Activated CD8-positive, alpha-beta T cell treated with anti-CD3 and anti-CD28 coated beads for 36 hours (primary cell): ENCODE measurements at regions of chr1 and their contacts with region 1.

Region 1: GRCh38 chr1:44002606-44003157 is 11.3 kb downstream of the CCDC24 start:
- DNase-seq: no peak
- ATAC-seq: no peak
- H3K4me3 Mint-ChIP-seq: no peak overlapping the region
- H3K27ac Mint-ChIP-seq: no peak overlapping the region
- H3K4me1 Mint-ChIP-seq: no peaks in the 10 kb centered on the region
- H3K27me3 Mint-ChIP-seq: no peaks in the 10 kb centered on the region
- CTCF ChIP-seq: peak; percentile 17

Region 2: DNA sequence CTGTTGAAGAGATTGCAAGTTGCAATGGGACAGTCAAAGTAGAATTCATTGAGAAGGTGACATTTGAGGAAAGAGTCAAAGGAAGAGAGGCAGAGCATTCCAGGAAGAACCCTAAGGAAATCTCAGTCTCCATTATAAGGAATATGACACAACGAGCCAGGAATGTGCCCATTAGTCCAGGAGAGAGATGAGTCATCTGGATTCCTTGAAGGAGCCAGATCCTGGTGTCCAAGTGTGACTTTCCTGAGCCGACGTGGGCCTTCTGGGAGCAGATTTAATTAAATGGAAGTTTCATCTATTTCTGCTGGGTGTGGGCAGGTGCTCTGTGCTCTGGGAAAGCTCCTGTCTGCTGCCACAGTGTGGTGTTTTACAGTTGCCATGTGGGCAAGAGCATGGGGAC is 180.6 kb before region 1 on chr1:
- CTCF ChIA-PET with region 1: no interaction called
- POLR2A ChIA-PET with region 1: no interaction called
- intact Hi-C with region 1: no loop called
- DNase-seq: no peak
- ATAC-seq: no peak
- H3K4me3 Mint-ChIP-seq: no peak overlapping the region
- H3K27ac Mint-ChIP-seq: no peak overlapping the region
- H3K4me1 Mint-ChIP-seq: no peaks in the 10 kb centered on the region
- H3K27me3 Mint-ChIP-seq: no peaks in the 10 kb centered on the region
- CTCF ChIP-seq: no peak

Region 3: GRCh38 chr1:43991476-43992231 is 11.0 kb before region 1 on chr1 and contains the start of gene CCDC24:
- CTCF ChIA-PET with region 1: interaction called, 29 read pairs
- POLR2A ChIA-PET with region 1: interaction called, 7 read pairs
- intact Hi-C with region 1: no loop called
- DNase-seq: peak; percentile 81
- ATAC-seq: peak; percentile 87
- H3K4me3 Mint-ChIP-seq: peak within 1 kb of the TSS; percentile 80
- H3K27ac Mint-ChIP-seq: peak within 1 kb of the TSS; percentile 59
- H3K4me1 Mint-ChIP-seq: peaks cover 12% of the 10 kb centered on the region
- H3K27me3 Mint-ChIP-seq: no peaks in the 10 kb centered on the region
- CTCF ChIP-seq: no peak
- total RNA-seq, gene CCDC24: 1.4 to 1.8 TPM

Region 4: DNA sequence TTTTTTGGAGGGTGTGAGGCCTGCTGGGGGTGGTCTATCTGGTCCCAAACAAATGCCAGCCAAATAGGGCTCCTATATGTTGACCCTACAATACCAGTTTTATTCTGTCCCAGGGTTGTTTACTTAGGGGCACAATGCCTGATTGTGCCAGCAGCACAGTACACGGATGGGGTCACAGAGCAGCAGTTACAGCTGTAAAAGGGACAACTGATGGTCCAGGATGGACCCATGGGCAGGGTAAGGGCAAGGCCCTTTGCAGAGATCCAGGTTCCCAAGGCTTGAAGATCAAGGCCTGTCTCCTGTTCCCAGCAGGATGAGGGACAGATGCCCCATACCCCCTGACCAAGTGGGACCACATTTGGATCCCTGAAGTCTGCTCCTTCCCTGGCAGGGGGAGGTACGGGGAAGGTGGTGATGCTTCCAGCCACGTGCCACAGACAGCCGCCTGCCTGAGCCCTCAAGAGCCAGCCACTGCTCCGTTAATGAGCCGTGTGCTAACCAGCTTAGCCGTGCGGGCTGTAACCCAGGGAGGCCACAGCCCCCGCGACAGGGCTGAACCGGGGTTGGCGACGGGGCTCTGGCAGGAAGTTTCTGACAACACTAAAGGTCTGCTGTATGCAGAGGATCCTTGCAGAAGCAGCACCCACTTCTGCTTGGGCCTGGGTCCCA is 10.4 kb after region 1 on chr1:
- CTCF ChIA-PET with region 1: interaction called, 42 read pairs
- POLR2A ChIA-PET with region 1: interaction called, 3 read pairs
- intact Hi-C with region 1: no loop called
- DNase-seq: peak; percentile 27
- ATAC-seq: peak; percentile 61
- H3K4me3 Mint-ChIP-seq: no peak overlapping the region
- H3K27ac Mint-ChIP-seq: no peak overlapping the region
- H3K4me1 Mint-ChIP-seq: peaks cover 12% of the 10 kb centered on the region
- H3K27me3 Mint-ChIP-seq: no peaks in the 10 kb centered on the region
- CTCF ChIP-seq: no peak

Region 5: GRCh38 chr1:44021581-44022321 is 19.1 kb after region 1 on chr1:
- CTCF ChIA-PET with region 1: interaction called, 42 read pairs
- POLR2A ChIA-PET with region 1: interaction called, 3 read pairs
- intact Hi-C with region 1: no loop called
- DNase-seq: no peak
- ATAC-seq: no peak
- H3K4me3 Mint-ChIP-seq: no peak overlapping the region
- H3K27ac Mint-ChIP-seq: no peak overlapping the region
- H3K4me1 Mint-ChIP-seq: no peaks in the 10 kb centered on the region
- H3K27me3 Mint-ChIP-seq: no peaks in the 10 kb centered on the region
- CTCF ChIP-seq: no peak

Region 6: DNA sequence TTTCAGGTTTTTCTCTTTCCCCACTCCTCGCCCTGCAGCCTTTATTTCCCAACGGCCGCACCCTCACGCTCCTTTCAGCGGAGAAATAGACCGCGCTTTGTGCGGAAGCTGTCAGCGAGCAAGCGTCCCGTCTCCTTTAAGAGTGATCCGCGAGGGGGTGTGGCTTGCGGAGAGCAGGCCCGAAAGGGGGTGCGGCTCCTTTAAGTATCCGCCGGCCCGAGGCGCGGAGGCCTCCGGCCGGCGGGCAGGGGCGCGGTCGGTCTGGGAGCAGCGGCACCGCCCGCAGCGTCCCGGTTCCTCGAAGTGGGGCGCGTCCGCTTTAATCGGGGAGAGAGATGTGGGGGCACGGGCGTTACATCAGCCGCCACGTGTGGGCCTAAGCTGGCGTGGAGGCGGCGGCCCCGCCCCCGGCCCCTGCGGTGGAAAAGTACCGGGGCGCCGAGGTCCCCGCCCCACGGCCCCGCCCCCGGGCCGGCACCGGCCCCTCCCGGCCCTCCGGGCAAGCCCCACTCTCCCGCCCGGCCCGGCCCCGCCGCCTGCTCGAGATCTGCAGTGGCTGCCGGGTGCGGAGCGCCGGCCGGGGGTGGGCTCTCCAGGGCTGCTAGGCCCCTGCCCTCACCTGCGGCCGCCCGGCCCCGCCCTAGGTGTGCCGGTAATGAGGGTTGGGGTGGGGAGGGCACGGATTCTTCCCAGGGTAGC is 27.4 kb after region 1 on chr1:
- CTCF ChIA-PET with region 1: interaction called, 98 read pairs
- POLR2A ChIA-PET with region 1: interaction called, 3 read pairs
- intact Hi-C with region 1: loop called (anchors 5 kb)
- DNase-seq: peak; percentile 95
- ATAC-seq: peak; percentile 84
- H3K4me3 Mint-ChIP-seq: peak overlapping the region; percentile 90
- H3K27ac Mint-ChIP-seq: peak overlapping the region; percentile 96
- H3K4me1 Mint-ChIP-seq: peaks cover 25% of the 10 kb centered on the region
- H3K27me3 Mint-ChIP-seq: no peaks in the 10 kb centered on the region
- CTCF ChIP-seq: no peak

Region 7: GRCh38 chr1:44036409-44037139 is 33.9 kb after region 1 on chr1:
- CTCF ChIA-PET with region 1: interaction called, 98 read pairs
- POLR2A ChIA-PET with region 1: interaction called, 4 read pairs
- intact Hi-C with region 1: loop called (anchors 5 kb)
- DNase-seq: peak; percentile 81
- ATAC-seq: peak; percentile 93
- H3K4me3 Mint-ChIP-seq: no peak overlapping the region
- H3K27ac Mint-ChIP-seq: no peak overlapping the region
- H3K4me1 Mint-ChIP-seq: peaks cover 9% of the 10 kb centered on the region
- H3K27me3 Mint-ChIP-seq: no peaks in the 10 kb centered on the region
- CTCF ChIP-seq: peak; percentile 72